Uterus (tissue), 4 donors: ENCODE measurements at regions of chr12 and their contacts with region 1.

Region 1: GRCh38 chr12:120428597-120429229 is 9.2 kb upstream of the COX6A1 start:
- DNase-seq: no peak
- H3K4me3 ChIP-seq: no peak overlapping the region
- H3K27ac ChIP-seq: no peak overlapping the region
- H3K4me1 ChIP-seq: no peaks in the 10 kb centered on the region
- H3K27me3 ChIP-seq: no peaks in the 10 kb centered on the region
- CTCF ChIP-seq: no peak
- POLR2A ChIP-seq: no peak

Region 2: GRCh38 chr12:120183211-120183631 is 245.5 kb before region 1 on chr12:
- intact Hi-C with region 1: no loop called
- DNase-seq: no peak
- H3K4me3 ChIP-seq: no peak overlapping the region
- H3K27ac ChIP-seq: no peak overlapping the region
- H3K4me1 ChIP-seq: no peaks in the 10 kb centered on the region
- H3K27me3 ChIP-seq: no peaks in the 10 kb centered on the region
- CTCF ChIP-seq: no peak
- POLR2A ChIP-seq: no peak

Region 3: GRCh38 chr12:120361506-120362208 is 67.1 kb before region 1 on chr12:
- intact Hi-C with region 1: loop called (anchors 5 kb)
- DNase-seq: peak; percentile 45 to 62
- H3K4me3 ChIP-seq: peak overlapping the region; percentile 22 to 35
- H3K27ac ChIP-seq: peak overlapping the region; percentile 44 to 70
- H3K4me1 ChIP-seq: no peaks in the 10 kb centered on the region
- H3K27me3 ChIP-seq: no peaks in the 10 kb centered on the region
- CTCF ChIP-seq: no peak
- POLR2A ChIP-seq: peak in 1 of 2 donors; percentile 30

Region 4: DNA sequence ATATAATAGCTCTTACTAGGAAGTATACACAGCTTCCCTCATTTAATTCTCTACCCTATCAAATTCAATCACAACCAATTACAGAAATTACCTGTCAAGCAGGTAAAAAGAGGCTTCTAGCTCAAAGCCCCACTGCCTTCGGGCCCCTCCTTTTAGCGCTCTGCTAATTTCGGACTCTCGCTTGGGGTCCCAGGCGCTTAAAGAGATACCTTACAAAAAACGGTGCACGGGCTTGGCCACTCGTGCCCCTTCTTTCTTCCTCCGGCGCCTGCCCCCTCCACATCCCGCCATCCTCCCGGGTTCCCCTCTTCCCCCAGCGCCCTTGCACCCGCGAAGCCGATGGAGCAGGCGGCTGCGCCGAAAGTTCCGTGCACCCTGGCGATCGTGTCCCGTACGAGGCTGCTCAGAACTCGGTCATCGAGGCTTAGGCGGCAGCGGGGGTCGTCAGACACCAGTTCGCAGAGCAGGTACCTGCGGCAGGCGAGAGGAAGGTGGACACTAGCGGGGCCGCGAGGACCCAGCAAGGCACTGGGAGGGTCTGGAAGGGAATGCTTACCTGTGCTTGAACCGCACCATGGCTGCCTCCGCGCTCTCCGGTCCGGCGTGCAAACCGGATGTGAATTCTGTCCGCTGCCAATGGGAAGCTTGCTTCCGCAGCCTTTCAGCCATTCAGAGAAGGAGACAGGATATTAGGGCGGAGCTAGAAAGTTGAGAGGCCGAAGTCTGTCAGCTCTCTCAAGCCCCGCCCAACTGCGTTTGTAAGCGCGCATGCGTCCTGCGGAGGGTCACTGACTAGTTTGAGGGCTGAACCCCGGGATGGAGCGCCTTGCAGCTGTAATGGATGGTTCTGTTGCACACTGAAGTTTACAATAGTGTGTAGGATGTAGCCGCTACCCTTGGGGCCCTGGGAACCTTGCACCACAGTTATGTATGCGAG is 152.3 kb after region 1 on chr12 and contains the start of gene POP5:
- intact Hi-C with region 1: no loop called
- DNase-seq: peak; percentile 95 to 97
- H3K4me3 ChIP-seq: peak within 1 kb of the TSS; percentile 81 to 96
- H3K27ac ChIP-seq: peak within 1 kb of the TSS; percentile 59 to 60
- H3K4me1 ChIP-seq: peaks cover 0 to 13% of the 10 kb centered on the region in 2 donors
- H3K27me3 ChIP-seq: no peaks in the 10 kb centered on the region
- CTCF ChIP-seq: peak in 1 of 4 experiments; percentile 6
- POLR2A ChIP-seq: peak; percentile 19 to 63
- total RNA-seq, gene POP5: 0.59 to 32.2 (median 18.0) TPM